AG04450 (cell line): ENCODE measurements at regions of chr2 and their contacts with region 1.

Region 1: DNA sequence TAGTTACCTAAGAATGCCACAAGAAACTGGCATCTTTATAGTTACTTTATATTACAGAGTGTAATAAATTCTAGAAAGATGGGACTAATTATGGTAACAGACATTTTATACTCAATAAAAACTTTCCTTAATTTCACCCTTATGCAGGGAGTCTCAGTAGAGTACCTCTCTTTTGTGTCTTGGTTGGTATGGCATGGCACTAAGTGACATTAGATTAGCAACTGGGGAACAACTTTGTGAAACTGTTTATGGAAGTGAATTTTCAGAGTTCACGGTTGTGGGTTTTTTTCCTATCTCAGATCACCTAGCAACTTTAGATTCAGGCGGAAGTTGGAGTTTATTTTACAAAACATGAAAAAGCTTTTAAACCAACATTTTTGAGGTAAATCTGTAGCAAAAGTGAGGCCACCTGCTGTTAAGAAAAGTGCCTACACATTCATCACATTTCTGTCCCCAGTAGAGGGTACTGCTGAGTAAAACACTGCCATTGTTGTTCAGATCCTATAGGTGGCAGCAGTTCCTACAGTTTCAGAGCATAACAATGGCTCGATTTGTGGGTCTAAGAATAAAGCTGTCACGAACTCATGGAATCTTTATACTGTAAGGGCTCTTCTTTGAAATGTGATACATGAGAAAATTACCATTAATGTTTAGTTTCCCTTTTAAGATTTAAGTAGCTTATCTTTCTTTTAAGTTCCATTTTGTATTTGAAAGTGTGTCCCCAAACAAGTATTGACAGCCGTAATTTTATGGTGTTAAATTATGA is 117.6 kb downstream of the CAMKMT start:
- DNase-seq: peak; percentile 71
- H3K4me3 ChIP-seq: no peak overlapping the region
- H3K27ac ChIP-seq: no peak overlapping the region
- H3K27me3 ChIP-seq: no peaks in the 10 kb centered on the region
- CTCF ChIP-seq: peak; percentile 100

Region 2: DNA sequence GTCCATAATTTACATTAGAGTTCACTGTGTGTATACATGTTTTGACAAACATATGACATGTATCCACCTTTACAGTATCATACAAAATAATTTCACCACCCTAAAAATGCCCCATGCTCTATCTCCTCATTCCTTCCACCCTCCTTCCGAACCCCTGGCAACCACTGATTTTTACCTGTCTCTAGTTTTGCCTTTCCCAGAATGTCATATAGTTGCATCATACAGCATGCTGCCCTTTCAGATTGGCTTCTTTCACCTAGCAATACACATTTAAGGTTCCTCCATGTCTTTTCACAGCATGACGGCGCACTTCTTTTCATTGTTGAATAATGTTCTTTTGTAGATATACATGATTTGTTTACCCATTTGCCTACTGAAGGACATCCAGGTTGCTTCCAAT is 493.9 kb before region 1 on chr2:
- CTCF ChIA-PET with region 1: no interaction called
- POLR2A ChIA-PET with region 1: no interaction called
- DNase-seq: no peak
- H3K4me3 ChIP-seq: no peak overlapping the region
- H3K27ac ChIP-seq: no peak overlapping the region
- H3K27me3 ChIP-seq: no peaks in the 10 kb centered on the region
- CTCF ChIP-seq: no peak

Region 3: GRCh38 chr2:44044281-44044720 is 435.0 kb before region 1 on chr2:
- CTCF ChIA-PET with region 1: interaction called, 40 read pairs
- POLR2A ChIA-PET with region 1: no interaction called
- DNase-seq: peak; percentile 47
- H3K4me3 ChIP-seq: no peak overlapping the region
- H3K27ac ChIP-seq: no peak overlapping the region
- H3K27me3 ChIP-seq: peaks cover 26% of the 10 kb centered on the region
- CTCF ChIP-seq: peak; percentile 97

Region 4: GRCh38 chr2:44420725-44421124 is 58.6 kb before region 1 on chr2:
- CTCF ChIA-PET with region 1: interaction called, 21 read pairs
- POLR2A ChIA-PET with region 1: no interaction called
- DNase-seq: no peak
- H3K4me3 ChIP-seq: no peak overlapping the region
- H3K27ac ChIP-seq: no peak overlapping the region
- H3K27me3 ChIP-seq: no peaks in the 10 kb centered on the region
- CTCF ChIP-seq: no peak

Region 5: GRCh38 chr2:44456946-44457345 is 22.4 kb before region 1 on chr2:
- CTCF ChIA-PET with region 1: interaction called, 46 read pairs
- POLR2A ChIA-PET with region 1: no interaction called
- DNase-seq: no peak
- H3K4me3 ChIP-seq: no peak overlapping the region
- H3K27ac ChIP-seq: no peak overlapping the region
- H3K27me3 ChIP-seq: no peaks in the 10 kb centered on the region
- CTCF ChIP-seq: no peak

Region 6: DNA sequence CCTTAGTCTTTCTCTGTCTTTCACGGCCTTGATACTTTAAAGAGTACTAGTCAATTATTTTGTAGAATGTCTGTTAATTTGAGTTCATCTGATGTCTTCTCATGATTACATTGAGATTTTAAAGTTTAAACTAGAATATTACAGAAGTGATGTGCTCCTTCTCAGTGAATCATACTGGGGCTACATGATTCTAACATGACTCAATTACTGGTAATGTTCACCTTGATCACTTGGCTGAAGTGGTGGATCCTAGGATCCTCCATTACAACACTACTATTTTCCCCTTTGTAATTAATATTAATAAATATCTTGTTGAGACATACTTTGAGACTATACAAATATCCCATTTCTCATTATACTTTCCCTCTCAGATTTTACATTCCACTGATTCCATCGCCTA is 30.9 kb after region 1 on chr2:
- CTCF ChIA-PET with region 1: interaction called, 40 read pairs
- POLR2A ChIA-PET with region 1: no interaction called
- DNase-seq: no peak
- H3K4me3 ChIP-seq: no peak overlapping the region
- H3K27ac ChIP-seq: no peak overlapping the region
- H3K27me3 ChIP-seq: no peaks in the 10 kb centered on the region
- CTCF ChIP-seq: no peak

Region 7: DNA sequence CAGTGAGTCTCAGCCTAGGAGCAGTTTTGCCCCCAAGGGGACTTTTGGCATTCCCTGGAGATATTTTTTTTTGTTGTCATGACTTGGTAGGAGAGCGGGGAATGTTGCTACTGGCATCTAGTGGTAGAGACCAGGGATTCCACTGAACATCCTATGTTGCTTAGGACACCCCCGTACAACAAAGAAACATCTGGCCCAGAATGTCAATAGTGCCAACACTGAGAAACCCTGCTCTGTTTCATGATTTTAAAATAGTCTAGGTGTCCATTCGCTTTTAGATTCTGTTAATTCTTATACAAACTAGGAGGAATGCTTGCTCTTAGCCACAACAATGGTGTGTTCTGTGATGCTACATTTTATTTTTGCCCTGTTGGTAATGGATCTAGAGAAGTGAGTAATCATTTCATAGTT is 236.4 kb after region 1 on chr2:
- CTCF ChIA-PET with region 1: interaction called, 46 read pairs
- POLR2A ChIA-PET with region 1: no interaction called
- DNase-seq: no peak
- H3K4me3 ChIP-seq: no peak overlapping the region
- H3K27ac ChIP-seq: no peak overlapping the region
- H3K27me3 ChIP-seq: no peaks in the 10 kb centered on the region
- CTCF ChIP-seq: peak; percentile 53

Region 8: GRCh38 chr2:45494269-45494977 is 1015.1 kb after region 1 on chr2:
- CTCF ChIA-PET with region 1: interaction called, 13 read pairs
- POLR2A ChIA-PET with region 1: no interaction called
- DNase-seq: peak; percentile 41
- H3K4me3 ChIP-seq: no peak overlapping the region
- H3K27ac ChIP-seq: no peak overlapping the region
- H3K27me3 ChIP-seq: no peaks in the 10 kb centered on the region
- CTCF ChIP-seq: peak; percentile 81